ENCODE measurements at regions of chr6 and their contacts with region 1.

Region 1: DNA sequence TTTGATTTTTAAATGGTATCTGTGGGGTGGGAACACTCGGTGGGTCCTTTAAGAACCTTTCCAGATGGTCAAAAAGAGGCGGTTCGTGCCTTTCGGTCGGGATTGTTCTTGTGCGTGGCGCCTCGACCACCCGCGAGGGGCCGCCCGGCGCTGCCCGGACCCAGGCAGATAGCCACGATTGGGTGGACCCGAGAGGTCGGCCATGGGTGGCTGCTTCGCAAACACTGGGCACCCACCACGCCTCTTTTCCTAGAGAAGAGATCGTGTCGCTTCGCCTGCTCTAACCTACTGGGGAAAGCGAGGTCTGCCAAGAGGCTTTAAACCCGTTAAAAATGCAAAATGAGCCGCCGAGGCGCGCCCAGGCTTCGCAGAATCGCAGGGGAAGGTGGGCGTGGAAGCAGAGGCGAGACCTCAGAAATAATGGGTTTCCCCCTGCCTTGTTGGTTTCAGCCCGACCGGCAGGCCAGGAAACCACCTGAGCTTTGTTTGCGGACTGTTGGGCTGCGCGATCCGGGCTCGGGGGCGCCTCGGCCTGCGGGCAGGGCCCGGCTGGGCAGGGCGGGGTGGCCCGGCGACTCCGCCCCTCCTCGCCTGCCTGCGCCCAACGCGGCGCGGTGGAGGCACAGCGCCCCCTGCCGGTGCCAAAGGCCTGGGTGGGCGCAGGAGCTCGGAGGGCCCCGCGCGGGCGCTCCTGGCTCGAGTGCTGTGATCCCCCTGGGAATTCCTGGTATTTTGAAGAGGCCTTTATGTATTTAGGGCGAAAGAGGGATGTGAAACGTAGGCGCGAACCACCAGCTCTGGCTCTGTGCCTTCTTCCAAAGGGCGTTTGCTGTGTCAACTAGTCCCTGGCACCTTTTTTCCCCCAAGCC is 1.6 kb downstream of the MARCKS start:
- DNase-seq: peak; percentile 88
- ATAC-seq: peak; percentile 95 to 97
- H3K4me3 ChIP-seq: peak overlapping the region; percentile 82
- H3K27ac ChIP-seq: peak overlapping the region; percentile 94
- H3K4me1 ChIP-seq: peaks cover 38% of the 10 kb centered on the region
- H3K27me3 ChIP-seq: peaks cover 10% of the 10 kb centered on the region
- CTCF ChIP-seq: peak; percentile 97

Region 2: DNA sequence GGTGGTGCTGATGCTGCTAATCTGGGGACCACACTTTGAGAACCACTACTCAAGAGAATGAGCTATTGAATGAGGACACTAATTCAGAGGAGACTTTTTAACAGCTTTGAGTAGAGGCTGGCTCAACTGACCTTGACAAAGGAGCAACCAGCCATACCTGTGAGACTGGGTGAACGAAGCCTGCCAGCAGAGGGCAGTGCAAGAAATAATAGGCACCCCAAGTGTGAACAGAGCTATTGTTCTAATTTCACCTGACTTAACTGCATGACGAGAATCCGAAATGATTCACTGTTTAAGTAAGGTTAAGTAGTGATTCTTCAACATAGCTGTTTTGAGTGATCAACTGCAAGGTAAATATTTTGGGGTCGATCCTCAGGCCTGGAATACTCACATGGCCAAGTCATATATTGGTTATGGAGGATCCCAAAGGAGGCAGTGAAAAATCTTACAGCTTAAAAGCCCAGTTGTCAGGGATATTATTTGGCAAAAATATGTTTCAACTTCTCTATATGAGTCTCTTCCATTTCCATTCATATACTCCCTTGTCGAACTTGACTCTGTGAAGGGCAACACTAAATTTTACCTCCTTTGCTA is 552.1 kb before region 1 on chr6:
- intact Hi-C with region 1: loop called (anchors 5 kb)
- DNase-seq: peak; percentile 74
- ATAC-seq: peak; percentile 81 to 82
- H3K4me3 ChIP-seq: no peak overlapping the region
- H3K27ac ChIP-seq: no peak overlapping the region
- H3K4me1 ChIP-seq: no peaks in the 10 kb centered on the region
- H3K27me3 ChIP-seq: no peaks in the 10 kb centered on the region
- CTCF ChIP-seq: peak; percentile 71

Region 3: DNA sequence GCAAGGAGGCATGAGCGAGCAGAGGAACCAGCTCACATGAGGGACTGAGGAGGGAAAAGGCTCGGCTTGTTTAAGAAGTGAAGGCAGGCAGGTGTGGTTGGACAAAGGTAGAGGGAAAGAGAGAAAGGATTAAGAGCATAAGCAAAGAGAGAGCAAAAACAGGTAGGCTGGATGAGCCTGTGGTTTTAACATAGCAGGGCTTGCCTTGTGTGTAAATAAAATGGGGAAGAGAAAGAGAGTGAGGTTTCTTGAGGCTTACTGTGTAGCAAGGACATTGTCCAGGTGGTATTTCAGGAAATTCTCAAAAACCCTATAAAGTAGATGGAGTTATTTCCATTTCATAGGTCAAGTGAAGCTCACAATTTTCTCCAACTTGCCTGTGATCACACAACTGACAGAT is 206.1 kb after region 1 on chr6:
- intact Hi-C with region 1: no loop called
- DNase-seq: no peak
- ATAC-seq: no peak
- H3K4me3 ChIP-seq: no peak overlapping the region
- H3K27ac ChIP-seq: no peak overlapping the region
- H3K4me1 ChIP-seq: no peaks in the 10 kb centered on the region
- H3K27me3 ChIP-seq: no peaks in the 10 kb centered on the region
- CTCF ChIP-seq: no peak